ENCODE measurements at regions of chr19 and their contacts with region 1.

Region 1: DNA sequence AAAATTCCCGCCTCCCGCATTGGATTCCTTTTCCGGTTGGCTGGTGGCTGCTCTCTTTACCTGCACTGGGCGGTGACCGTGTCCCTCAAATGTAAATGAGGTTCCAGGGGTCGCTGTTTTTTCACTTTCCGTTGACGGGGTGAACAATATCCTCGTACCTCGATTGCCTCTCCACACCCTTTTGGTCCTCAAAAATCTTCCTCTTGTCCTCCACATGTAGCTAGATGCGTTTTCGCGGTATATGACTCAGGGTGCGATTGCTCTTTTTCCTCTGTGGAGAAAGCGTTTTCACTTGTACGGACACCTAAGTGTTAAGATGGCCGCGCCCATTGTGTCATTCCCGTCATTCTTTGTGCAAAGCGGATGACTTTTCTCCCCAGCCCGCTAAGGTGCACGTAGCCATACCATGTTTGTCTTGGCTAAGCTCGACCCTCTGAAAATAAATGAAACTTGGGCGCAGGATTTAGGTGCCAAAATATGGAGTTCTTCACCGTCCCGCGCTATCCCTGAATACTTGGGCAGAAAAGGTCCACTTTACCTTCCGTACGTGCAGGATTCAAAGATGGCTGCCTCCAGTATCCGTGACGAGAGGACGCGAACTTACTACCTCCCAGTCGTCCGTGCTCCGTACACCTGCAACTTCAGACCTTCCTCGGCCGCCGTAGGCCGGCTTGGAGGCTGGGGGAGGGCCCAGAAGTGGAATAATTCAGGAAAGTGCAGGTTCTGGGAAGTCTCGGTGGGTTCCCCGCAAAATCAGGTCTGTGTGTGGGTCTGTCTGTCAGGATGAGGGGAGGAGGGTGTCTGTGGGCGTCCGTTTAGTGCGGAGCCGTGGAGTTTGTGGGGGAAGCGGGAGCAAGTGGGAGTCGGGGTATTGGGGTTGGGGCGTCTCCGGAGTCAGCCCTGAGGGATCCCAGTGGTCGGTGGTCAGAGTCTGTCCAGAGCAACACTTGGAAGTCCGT is at the start of gene ZNF613:
- DNase-seq: peak; percentile 65 to 87 (median 83)
- ATAC-seq: peak; percentile 92
- H3K4me3 ChIP-seq: peak within 1 kb of the TSS; percentile 70
- H3K4me3 Mint-ChIP-seq: peak within 1 kb of the TSS; percentile 90 to 100 (median 97)
- H3K27ac ChIP-seq: peak within 1 kb of the TSS; percentile 77
- H3K27ac Mint-ChIP-seq: peak within 1 kb of the TSS; percentile 87 to 96 (median 92)
- H3K4me1 ChIP-seq: peaks cover 4% of the 10 kb centered on the region in 2 donors
- H3K4me1 Mint-ChIP-seq: peaks cover 19 to 41% (median 36%) of the 10 kb centered on the region in 7 donors
- H3K27me3 ChIP-seq: no peaks in the 10 kb centered on the region
- H3K27me3 Mint-ChIP-seq: no peaks in the 10 kb centered on the region
- total RNA-seq, gene ZNF613: 1.5 to 9.6 (median 5.2) TPM

Region 2: DNA sequence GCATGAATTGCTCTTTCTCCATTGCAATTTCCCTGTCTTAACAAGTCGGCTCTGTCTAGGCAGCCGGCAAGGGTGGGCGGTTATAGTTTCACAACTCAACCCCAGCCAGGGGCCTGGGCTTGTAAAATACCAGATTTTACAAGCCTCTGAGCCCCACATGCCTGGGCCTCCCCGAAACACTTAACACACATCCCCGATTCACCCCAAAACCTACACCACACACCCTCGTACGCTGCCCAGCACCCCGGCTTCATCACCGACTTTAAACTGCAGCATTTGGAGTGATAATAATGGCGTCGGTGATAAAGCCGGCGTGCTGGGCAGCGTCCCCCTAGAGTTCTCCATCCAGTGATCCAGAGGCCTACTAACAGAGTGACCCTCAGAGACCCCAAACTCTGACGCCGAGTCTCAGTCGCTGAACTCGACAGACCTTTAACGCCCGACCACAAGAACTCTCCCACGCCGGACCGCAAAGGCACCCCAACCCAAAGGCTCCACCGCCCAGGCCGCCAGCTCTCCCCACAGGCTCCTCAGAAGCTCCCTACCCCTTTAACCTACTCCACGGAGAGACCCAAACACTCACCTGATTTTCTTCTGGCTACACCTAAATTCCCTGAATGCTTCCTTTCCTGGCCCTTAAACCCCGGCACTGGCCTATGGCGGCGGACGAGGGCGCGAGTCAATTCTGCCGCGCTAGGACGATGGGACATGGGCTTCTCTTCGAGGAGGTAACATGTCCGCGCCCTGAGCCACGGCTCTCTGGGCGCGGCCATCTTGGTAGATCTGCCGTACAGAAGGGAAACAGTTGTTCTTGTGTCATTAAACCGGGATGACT is 22.5 kb before region 1 on chr19 and contains the start of gene ZNF649:
- CTCF ChIA-PET with region 1: no interaction called
- POLR2A ChIA-PET with region 1: interaction called, 3 read pairs
- intact Hi-C with region 1: loop called (anchors 1 kb)
- DNase-seq: peak; percentile 67 to 84 (median 74)
- ATAC-seq: peak; percentile 98
- H3K4me3 ChIP-seq: peak within 1 kb of the TSS; percentile 84
- H3K4me3 Mint-ChIP-seq: peak within 1 kb of the TSS; percentile 87 to 100 (median 99)
- H3K27ac ChIP-seq: peak within 1 kb of the TSS; percentile 84
- H3K27ac Mint-ChIP-seq: peak within 1 kb of the TSS; percentile 89 to 99 (median 97)
- H3K4me1 ChIP-seq: peaks cover 0 to 5% of the 10 kb centered on the region in 2 donors
- H3K4me1 Mint-ChIP-seq: peaks cover 8 to 33% (median 28%) of the 10 kb centered on the region in 7 donors
- H3K27me3 ChIP-seq: no peaks in the 10 kb centered on the region
- H3K27me3 Mint-ChIP-seq: peaks cover 0 to 31% (median 19%) of the 10 kb centered on the region in 5 donors
- total RNA-seq, gene ZNF649: 11.1 to 33.4 (median 14.5) TPM